BJ (cell line): ENCODE measurements at regions of chr7 and their contacts with region 1.

Region 1: GRCh38 chr7:139645572-139646523 is 122.4 kb downstream of the CLEC2L start:
- DNase-seq: peak; percentile 8
- H3K4me3 ChIP-seq: no peak overlapping the region
- H3K27me3 ChIP-seq: no peaks in the 10 kb centered on the region
- CTCF ChIP-seq: peak; percentile 87

Region 2: GRCh38 chr7:138935465-138936011 is 710.3 kb before region 1 on chr7:
- CTCF ChIA-PET with region 1: no interaction called
- POLR2A ChIA-PET with region 1: no interaction called
- DNase-seq: peak; percentile 65
- H3K4me3 ChIP-seq: no peak overlapping the region
- H3K27me3 ChIP-seq: no peaks in the 10 kb centered on the region
- CTCF ChIP-seq: no peak

Region 3: DNA sequence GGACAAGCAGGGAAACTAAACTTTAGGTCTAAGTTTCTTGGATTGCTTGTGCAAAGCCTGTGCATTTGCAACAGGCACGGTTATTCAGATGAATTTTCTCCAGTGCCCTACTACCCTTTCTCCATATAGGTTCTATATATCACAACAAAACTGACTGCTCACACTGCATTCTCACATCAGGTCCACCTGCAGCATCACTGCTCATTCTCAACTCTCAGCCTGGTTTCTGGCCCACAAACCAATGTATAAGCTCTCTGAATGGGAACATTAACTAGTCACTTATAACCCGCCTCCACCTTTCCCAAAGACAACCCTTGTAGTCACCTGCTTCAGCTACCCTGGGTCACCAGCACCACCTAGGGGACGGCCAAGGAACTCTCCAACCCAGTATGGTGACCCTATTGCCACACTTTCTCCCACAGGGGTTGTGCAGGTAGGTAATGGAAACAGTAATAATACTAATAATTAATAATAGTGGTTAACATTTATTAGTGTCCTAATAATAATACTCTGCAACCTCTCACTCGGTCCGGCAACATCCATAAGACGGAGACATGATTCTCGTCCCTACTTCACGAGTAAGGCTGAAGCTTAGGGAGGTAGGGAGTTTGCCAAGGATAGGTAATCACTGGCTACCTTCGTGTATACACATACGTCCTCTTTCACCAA is 25.0 kb before region 1 on chr7:
- CTCF ChIA-PET with region 1: interaction called, 50 read pairs
- POLR2A ChIA-PET with region 1: no interaction called
- DNase-seq: no peak
- H3K4me3 ChIP-seq: no peak overlapping the region
- H3K27me3 ChIP-seq: no peaks in the 10 kb centered on the region
- CTCF ChIP-seq: peak; percentile 70

Region 4: DNA sequence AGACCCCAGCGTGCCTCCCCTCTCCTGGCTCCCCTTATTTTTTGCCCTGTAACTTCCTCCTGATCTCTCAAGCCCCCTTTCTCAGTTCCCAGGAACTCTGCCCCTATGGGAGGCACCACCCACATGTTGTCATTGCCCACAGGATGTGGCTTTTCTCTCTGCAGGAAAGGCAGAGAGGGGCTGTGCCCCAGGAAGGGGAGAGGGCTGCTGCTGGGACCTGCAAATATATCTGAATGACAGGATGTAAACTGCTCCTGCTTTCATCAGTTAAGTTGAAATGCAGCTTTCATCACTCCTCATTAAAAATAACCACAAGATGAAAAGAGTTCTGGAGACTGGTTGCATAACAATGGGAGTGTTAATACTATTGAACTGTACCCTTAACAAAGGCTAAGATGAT is 19.0 kb before region 1 on chr7:
- CTCF ChIA-PET with region 1: interaction called, 25 read pairs
- POLR2A ChIA-PET with region 1: no interaction called
- DNase-seq: no peak
- H3K4me3 ChIP-seq: no peak overlapping the region
- H3K27me3 ChIP-seq: no peaks in the 10 kb centered on the region
- CTCF ChIP-seq: no peak

Region 5: DNA sequence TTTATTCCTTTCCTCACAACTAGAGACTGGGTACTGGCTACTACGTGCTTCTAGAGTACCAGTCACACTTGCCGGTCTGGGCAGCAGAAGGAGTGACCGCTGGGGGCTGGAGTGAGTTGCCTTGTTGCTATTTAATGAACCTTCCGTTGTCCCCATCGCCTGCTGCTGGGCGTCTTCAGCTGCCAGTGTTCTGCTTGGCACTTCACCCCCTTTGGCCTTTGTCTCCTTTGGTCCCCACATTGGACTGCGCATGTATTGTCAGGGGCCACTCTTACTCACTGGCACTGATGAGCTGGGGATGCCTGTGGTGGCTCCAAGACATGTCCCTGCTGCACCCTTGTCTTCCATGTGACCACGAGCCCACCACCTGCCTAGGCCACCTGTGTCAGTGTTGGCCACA is 11.7 kb before region 1 on chr7:
- CTCF ChIA-PET with region 1: interaction called, 25 read pairs
- POLR2A ChIA-PET with region 1: interaction called, 4 read pairs
- DNase-seq: no peak
- H3K4me3 ChIP-seq: no peak overlapping the region
- H3K27me3 ChIP-seq: no peaks in the 10 kb centered on the region
- CTCF ChIP-seq: no peak

Region 6: DNA sequence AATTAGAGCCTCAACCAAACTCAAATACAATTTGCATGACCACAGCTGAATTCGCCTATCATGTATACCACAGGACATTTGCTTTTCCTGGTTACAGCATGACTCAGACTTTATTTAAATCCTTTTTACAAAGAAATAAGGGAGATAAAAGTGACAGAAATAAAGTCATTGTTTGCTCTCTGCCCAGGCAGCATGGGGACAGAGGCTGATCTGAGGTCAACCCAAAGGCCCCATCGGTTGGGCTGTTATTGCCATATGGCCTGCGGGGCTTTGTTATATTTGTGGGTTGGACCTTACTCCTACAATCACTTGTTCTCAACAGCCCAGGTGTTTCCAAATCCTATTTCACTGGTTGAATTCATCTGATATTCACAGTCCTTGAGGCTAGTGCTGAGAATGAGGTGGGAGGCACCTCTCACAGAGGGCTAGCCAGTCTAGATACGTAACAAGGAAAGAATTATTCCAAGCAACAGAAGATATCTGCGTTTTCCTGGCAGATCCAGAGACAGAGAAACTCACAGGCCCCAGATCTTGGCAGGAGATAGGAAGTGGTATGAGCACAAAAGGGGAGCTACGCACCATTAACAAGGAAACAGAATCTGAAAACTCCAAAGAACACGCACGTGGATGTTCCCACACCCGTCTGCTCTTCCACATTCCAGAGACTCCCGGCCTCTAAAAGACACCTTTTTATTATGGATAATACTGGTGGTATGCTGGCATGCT is 14.6 kb after region 1 on chr7:
- CTCF ChIA-PET with region 1: interaction called, 13 read pairs
- POLR2A ChIA-PET with region 1: no interaction called
- DNase-seq: no peak
- H3K4me3 ChIP-seq: no peak overlapping the region
- H3K27me3 ChIP-seq: no peaks in the 10 kb centered on the region
- CTCF ChIP-seq: no peak

Region 7: GRCh38 chr7:139767561-139767982 is 121.7 kb after region 1 on chr7:
- CTCF ChIA-PET with region 1: interaction called, 28 read pairs
- POLR2A ChIA-PET with region 1: no interaction called
- DNase-seq: no peak
- H3K4me3 ChIP-seq: no peak overlapping the region
- H3K27me3 ChIP-seq: no peaks in the 10 kb centered on the region
- CTCF ChIP-seq: no peak

Region 8: DNA sequence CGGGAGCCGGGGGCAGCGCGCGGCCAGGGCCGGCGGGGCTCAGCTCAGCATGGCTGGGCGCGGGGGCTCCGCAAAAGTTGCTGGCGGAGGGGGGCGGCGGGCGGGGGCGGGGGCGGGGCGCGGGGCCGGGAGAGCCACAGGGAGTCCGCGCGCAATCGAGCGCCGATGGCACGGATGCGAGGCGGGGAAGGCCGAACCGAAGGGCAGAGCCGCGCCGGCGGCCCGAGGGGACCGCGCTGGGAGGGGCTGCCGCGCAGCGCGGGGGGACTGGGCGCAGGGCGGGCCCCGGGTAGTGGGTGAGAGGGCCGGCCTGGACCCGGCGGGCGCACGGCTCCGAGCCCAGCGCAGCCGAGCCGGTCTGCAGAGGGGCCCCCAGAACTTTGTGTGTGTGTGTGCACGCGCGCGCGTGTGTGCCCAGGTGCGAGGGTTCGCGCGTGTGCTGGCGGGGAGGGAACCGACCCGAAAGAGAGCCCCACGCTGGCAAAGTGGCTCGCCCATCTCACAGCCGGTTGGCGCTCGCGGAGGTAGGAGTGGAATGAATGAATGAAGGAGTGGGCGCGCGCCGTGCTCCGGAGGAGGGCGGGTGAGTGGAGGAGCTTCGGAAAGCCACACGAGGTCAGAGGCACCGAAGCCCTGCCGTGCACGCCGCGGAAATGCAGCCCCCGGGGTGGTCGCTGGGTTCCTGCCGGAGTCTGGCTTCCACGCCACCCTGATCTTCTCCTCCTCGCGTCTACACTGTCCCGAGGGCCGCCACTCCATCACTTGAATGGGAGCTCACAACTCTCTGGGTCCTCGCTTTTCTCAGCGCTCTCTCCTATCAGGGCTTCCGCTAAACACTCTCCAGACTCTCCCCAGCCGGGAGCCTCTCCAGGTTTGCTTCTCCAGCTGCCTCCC is 132.3 kb after region 1 on chr7 and contains the start of gene HIPK2:
- CTCF ChIA-PET with region 1: interaction called, 22 read pairs
- POLR2A ChIA-PET with region 1: no interaction called
- DNase-seq: no peak
- H3K4me3 ChIP-seq: peak within 1 kb of the TSS; percentile 83
- H3K27me3 ChIP-seq: peaks cover 13% of the 10 kb centered on the region
- CTCF ChIP-seq: no peak
- polyA plus RNA-seq, gene HIPK2: 2.9 and 3.6 TPM in 2 replicates